Activated naive CD4-positive, alpha-beta T cell treated with anti-CD3 and anti-CD28 coated beads, Interleukin-2, amount 10 ng/mL, durations not matched to agents 7 days and 5 days (primary cell): ENCODE measurements at regions of chr16 and their contacts with region 1.

Region 1: GRCh38 chr16:57519796-57520360 is 16.5 kb downstream of the CCDC102A start:
- DNase-seq: peak; percentile 86
- H3K4me3 Mint-ChIP-seq: no peak overlapping the region
- H3K27ac Mint-ChIP-seq: no peak overlapping the region
- H3K4me1 Mint-ChIP-seq: peaks cover 7% of the 10 kb centered on the region
- H3K27me3 Mint-ChIP-seq: no peaks in the 10 kb centered on the region

Region 2: DNA sequence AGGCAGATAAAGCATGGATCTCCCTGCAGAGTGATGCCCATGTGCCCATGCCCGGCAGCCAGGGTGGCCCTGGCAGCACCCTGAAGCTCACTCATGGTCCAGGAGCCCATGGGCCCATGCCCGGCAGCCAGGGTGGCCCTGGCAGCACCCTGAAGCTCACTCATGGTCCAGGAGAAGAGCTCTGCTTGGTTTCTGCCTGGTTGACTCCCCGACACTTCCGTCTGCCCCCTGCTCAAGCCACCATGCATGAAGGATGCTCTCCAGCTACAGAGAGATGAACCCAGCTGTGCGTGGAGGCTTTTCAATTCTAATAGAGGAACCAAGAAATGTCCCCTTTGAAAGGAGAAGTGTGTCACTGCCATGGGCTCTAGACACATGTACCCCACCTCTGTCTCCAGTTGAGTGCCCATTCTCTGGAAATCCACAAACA is 106.6 kb before region 1 on chr16:
- CTCF ChIA-PET with region 1: interaction called, 94 read pairs
- DNase-seq: no peak
- H3K4me3 Mint-ChIP-seq: no peak overlapping the region
- H3K27ac Mint-ChIP-seq: no peak overlapping the region
- H3K4me1 Mint-ChIP-seq: peaks cover 12% of the 10 kb centered on the region
- H3K27me3 Mint-ChIP-seq: peaks cover 22% of the 10 kb centered on the region

Region 3: DNA sequence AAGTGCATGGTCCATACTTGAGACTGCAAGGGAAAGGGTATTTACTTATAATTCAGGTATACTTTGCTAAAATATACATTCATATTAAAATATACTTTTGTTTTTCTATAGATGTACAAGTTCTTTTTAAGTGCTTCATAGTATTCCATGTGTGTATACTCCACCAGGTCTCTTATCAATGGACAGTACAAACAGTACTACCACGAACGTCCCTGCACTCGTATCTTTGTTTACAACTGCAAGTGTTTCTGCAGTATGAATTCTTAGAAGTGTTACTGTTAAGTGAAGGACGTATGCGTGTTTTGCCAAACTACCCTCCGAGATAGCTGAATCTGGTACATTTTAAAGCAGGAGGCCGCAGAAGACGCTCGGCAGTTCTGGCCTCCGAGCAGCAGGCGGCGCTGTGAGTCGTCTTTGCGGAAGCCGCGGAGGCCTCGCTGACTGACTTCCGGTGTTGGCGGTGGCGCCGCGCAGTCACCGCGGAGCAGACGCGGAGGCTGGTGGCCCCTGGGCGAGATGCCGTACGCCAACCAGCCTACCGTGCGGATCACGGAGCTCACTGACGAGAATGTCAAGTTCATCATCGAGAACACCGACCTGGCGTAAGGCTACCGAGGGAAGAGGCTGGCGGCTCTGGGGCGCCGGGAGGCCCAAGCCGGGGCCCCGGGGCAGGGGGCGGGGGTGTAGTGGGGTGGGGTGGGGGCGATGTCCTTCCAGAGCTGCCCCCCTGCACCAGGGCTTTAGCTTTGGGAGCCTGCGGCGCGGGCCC is 57.5 kb before region 1 on chr16 and contains the start of gene POLR2C:
- CTCF ChIA-PET with region 1: interaction called, 22 read pairs
- DNase-seq: peak; percentile 94
- H3K4me3 Mint-ChIP-seq: peak within 1 kb of the TSS; percentile 100
- H3K27ac Mint-ChIP-seq: peak within 1 kb of the TSS; percentile 97
- H3K4me1 Mint-ChIP-seq: peaks cover 28% of the 10 kb centered on the region
- H3K27me3 Mint-ChIP-seq: peaks cover 3% of the 10 kb centered on the region

Region 4: DNA sequence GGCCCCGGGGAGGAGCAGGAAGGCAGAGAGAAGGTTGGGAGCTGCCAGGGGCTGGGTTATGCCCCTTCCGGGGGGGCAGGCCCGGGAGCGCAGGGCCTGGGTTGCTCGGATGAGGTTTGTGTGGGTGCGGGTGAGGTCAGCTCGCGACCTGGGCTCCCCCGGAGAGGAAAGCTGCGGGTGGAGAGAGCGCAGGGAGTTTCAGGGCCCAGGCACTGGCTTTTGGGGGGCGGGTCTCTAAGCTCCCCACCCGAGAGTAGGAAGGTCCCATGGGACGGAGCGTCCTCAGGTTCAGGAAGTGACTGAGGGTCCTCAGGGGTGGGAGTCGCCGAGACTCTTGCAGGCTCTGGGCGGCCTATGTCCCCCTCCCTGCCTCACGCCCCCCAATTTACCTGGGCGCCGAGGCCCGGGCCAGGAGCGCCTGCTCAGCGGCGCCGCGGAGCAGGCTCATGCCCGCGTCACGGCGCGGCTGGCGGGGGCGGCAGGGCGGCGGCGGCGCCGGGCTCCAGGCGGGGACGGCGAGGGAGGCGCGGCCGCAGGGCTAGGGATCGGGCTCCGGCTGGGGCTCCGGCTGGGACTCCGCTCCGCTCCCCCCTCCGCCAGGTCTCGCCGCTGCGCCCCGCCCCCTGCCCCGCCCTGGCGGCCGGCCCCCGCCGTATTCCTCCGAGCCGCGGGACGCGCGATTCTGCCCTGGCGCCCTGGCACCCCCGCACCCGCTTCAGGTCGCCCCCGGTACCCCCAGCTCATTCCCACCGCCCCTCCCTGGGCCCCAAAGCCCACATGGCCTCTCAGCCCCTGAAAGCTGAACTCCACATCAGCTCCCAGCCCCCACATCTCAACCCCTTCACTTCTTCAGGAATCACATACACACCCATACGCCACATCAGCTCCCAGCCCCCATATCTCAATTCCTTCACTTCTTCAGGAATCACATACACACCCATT is 33.7 kb before region 1 on chr16 and contains the start of gene DOK4:
- CTCF ChIA-PET with region 1: interaction called, 18 read pairs
- DNase-seq: peak; percentile 85
- H3K4me3 Mint-ChIP-seq: peak within 1 kb of the TSS; percentile 75
- H3K27ac Mint-ChIP-seq: peak within 1 kb of the TSS; percentile 62
- H3K4me1 Mint-ChIP-seq: peaks cover 13% of the 10 kb centered on the region
- H3K27me3 Mint-ChIP-seq: peaks cover 45% of the 10 kb centered on the region

Region 5: DNA sequence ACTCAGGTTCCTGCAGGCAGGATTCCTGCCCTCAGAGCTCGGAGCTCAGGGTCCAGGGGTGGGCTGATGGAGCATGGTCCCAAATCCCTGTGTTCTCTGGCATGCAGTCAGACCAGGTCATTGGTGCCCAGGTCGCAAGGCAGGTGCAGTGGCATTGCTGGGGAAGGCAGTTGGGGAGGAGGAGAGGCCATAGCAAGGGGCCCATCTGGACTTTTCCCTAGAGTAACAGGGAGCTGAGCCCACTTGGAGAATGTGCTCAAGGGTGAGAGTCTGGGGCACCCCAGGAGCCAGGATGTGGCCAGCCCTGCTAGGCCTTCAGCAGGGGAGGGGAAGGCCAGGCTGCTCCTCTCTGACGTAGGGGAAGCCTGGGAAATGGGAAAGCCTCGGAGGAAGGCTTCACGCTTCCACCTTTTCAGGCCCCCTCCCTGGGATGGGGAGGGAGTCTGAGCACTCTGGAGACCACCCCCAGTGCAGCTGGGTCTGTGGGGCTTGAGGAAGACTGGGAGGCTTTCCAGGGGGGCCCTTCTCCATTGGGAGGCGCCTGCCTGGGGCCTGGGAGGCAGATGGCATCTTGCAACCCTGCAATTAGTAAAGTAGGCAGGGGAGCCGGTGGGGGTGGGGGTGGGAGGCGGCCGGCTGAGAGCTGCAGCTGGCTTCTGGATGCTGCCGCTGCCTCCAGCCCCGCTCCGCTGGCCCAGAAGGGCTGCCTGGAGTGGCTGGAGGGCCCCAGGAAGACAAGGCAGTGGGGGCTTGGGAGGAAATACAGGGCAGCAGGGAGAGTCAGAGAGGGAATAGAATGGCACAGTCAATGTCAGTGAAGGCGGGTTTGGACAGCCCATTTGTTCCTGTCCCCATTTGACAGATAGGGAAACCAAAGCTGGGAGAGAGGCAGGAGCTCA is 12.5 kb before region 1 on chr16:
- CTCF ChIA-PET with region 1: interaction called, 16 read pairs
- DNase-seq: no peak
- H3K4me3 Mint-ChIP-seq: no peak overlapping the region
- H3K27ac Mint-ChIP-seq: no peak overlapping the region
- H3K4me1 Mint-ChIP-seq: no peaks in the 10 kb centered on the region
- H3K27me3 Mint-ChIP-seq: peaks cover 34% of the 10 kb centered on the region

Region 6: DNA sequence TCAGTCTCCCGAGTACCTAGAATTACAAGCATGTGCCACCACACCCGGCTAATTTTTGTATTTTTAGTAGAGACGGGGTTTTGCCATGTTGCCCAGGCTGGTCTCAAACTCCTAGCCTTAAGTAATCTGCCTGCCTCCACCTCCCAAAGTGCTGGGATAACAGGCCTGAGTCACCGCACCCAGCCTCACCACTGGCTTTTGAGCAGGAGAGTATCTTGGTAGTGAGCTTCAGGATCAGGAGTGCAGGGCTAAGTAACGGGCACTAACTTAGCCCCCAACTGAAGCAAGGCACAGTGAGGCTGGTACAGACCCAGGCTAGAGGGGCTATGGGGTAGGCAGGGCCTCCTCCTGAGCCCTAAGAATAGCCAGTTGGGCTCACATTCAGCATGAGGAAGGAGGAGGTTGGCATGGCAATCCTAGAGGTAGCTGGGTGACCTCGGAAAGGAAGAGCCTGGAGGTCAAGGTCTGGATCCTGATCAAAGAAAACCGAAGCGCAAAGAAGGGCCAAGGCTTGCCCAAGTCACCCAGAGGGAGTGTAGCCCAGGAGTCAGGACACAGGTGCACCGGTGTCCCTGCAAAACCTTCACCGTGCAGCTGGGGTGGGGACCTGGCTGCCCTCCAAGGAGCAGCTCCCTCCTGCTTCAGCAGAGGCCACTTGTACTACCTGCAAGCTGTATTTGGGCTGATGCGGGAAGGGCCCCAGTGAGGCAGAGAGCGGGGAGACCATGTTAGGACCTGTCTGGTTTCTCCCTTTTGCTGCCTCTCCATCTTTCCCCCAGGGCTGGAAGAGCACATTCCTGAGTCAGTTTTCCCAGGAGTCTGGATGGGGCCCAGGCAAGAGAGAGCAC is 21.3 kb after region 1 on chr16:
- CTCF ChIA-PET with region 1: interaction called, 16 read pairs
- DNase-seq: peak; percentile 18
- H3K4me3 Mint-ChIP-seq: no peak overlapping the region
- H3K27ac Mint-ChIP-seq: no peak overlapping the region
- H3K4me1 Mint-ChIP-seq: peaks cover 72% of the 10 kb centered on the region
- H3K27me3 Mint-ChIP-seq: no peaks in the 10 kb centered on the region